GM13977 (cell line): ENCODE measurements at regions of chrX and their contacts with region 1.

Region 1: DNA sequence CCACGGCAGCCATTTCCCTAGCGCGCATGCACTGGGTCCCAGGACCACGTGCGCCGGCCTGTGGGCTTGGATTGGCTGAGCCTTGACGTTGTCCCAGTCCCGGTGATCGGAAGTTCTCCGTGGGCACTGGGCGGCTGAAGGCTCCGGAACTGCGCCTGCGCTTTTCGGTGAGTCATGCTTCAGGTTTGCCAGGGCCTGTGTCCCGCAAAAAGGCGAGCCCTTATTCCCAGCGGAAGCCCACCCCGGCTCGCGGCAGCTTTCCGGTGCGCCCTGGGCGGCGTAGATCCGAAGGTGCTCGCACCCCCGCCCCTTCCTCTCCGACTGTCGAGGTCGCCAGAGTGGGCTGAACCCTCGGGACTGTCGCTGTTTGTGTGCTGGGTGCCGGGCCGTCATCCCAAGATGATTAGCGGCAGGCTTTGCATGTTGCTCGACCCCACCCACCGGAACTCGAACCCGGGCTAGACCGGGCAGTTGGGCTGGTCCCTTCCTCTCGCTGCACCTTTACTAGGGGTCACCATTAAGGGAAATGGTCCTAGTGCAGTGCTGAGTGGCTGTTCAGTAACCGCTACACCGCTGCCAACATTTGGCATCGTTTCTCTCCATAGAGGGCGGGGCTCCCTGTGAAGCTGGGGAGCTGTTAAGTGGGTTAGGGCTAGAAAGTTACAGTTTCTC is at the start of gene TCEANC:
- DNase-seq: peak; percentile 89
- CTCF ChIP-seq: no peak

Region 2: GRCh38 chrX:13506574-13506973 is 146.6 kb before region 1 on chrX:
- in situ Hi-C with region 1: loop called (anchors 10 kb)
- DNase-seq: peak; percentile 62
- CTCF ChIP-seq: peak; percentile 74